ENCODE measurements at regions of chr19 and their contacts with region 1.

Region 1: GRCh38 chr19:28633319-28634018 is 579.5 kb downstream of the UQCRFS1 start:
- DNase-seq: peak; percentile 39 to 72
- H3K4me3 ChIP-seq: no peak overlapping the region
- H3K27ac ChIP-seq: no peak overlapping the region
- H3K4me1 ChIP-seq: peaks cover 0 to 3% (median 2%) of the 10 kb centered on the region in 4 experiments; a peak in 6 of 7 replicates
- H3K27me3 ChIP-seq: no peaks in the 10 kb centered on the region
- CTCF ChIP-seq: peak; percentile 91 to 99 (median 94)
- EP300 ChIP-seq: no peak
- POLR2A ChIP-seq: no peak
- RAD21 ChIP-seq: peak; percentile 97 to 98

Region 2: GRCh38 chr19:28443361-28443760 is 190.1 kb before region 1 on chr19:
- CTCF ChIA-PET with region 1: no interaction called
- POLR2A ChIA-PET with region 1: no interaction called
- DNase-seq: no peak
- H3K4me3 ChIP-seq: no peak overlapping the region
- H3K27ac ChIP-seq: no peak overlapping the region
- H3K4me1 ChIP-seq: peaks cover 3 to 17% (median 8%) of the 10 kb centered on the region in 4 experiments; a peak in 5 of 7 replicates
- H3K27me3 ChIP-seq: no peaks in the 10 kb centered on the region
- CTCF ChIP-seq: no peak
- EP300 ChIP-seq: no peak
- POLR2A ChIP-seq: no peak
- RAD21 ChIP-seq: no peak

Region 3: DNA sequence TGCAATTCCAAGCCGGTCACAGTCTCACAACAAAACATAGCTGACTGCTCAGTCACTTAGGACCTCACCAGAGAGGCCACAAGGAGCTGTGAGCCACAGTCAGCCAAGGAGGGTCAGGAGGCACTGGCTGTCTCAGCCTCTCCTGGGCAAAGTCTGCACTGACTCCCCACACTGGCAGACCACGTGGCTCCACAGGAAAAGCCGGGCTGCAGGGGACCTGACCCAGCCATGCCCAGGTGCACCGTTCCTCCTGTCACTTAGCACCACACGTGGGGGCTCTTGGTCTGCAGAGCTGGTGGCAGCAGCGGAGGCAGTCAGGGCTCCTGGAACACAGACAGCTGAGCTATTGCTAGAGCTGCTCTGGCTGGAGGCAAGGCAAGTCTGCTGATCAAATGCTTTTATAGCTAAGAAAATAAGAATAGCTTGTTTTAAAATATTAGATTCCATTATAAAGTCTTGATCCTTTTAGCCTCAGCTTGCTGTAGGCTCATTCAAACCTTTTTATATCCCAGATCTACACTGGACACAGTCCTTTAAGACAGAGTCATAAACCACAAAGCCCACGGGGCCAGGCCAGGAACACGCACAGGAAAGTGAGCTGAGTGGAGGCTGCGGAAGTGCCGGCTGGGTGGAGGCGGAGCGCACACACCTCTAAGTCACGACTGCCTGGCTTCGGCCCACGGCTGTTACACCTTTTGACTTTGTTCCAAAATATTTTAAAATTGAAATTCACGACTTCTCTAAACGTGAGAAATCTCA is 164.6 kb before region 1 on chr19:
- CTCF ChIA-PET with region 1: interaction called, 29 read pairs
- POLR2A ChIA-PET with region 1: interaction called, 3 read pairs
- DNase-seq: no peak
- H3K4me3 ChIP-seq: no peak overlapping the region
- H3K27ac ChIP-seq: no peak overlapping the region
- H3K4me1 ChIP-seq: peaks cover 0 to 5% (median 4%) of the 10 kb centered on the region in 4 experiments; a peak in 3 of 7 replicates
- H3K27me3 ChIP-seq: no peaks in the 10 kb centered on the region
- CTCF ChIP-seq: peak in 1 of 3 experiments; percentile 17; a peak in 1 of 4 replicates
- EP300 ChIP-seq: no peak
- POLR2A ChIP-seq: no peak
- RAD21 ChIP-seq: peak; percentile 37 to 61; a peak in 3 of 4 replicates

Region 4: GRCh38 chr19:28530406-28531035 is 102.9 kb before region 1 on chr19:
- CTCF ChIA-PET with region 1: interaction called, 10 read pairs
- POLR2A ChIA-PET with region 1: no interaction called
- DNase-seq: no peak
- H3K4me3 ChIP-seq: no peak overlapping the region
- H3K27ac ChIP-seq: no peak overlapping the region
- H3K4me1 ChIP-seq: no peaks in the 10 kb centered on the region
- H3K27me3 ChIP-seq: no peaks in the 10 kb centered on the region
- CTCF ChIP-seq: no peak
- EP300 ChIP-seq: no peak
- POLR2A ChIP-seq: no peak
- RAD21 ChIP-seq: peak in 1 of 2 experiments; percentile 11; a peak in 1 of 4 replicates

Region 5: GRCh38 chr19:28578785-28579505 is 54.5 kb before region 1 on chr19:
- CTCF ChIA-PET with region 1: interaction called, 15 read pairs
- POLR2A ChIA-PET with region 1: no interaction called
- DNase-seq: no peak
- H3K4me3 ChIP-seq: no peak overlapping the region
- H3K27ac ChIP-seq: no peak overlapping the region
- H3K4me1 ChIP-seq: peaks cover 6 to 27% (median 15%) of the 10 kb centered on the region in 4 experiments
- H3K27me3 ChIP-seq: no peaks in the 10 kb centered on the region
- CTCF ChIP-seq: no peak
- EP300 ChIP-seq: no peak
- POLR2A ChIP-seq: no peak
- RAD21 ChIP-seq: no peak

Region 6: DNA sequence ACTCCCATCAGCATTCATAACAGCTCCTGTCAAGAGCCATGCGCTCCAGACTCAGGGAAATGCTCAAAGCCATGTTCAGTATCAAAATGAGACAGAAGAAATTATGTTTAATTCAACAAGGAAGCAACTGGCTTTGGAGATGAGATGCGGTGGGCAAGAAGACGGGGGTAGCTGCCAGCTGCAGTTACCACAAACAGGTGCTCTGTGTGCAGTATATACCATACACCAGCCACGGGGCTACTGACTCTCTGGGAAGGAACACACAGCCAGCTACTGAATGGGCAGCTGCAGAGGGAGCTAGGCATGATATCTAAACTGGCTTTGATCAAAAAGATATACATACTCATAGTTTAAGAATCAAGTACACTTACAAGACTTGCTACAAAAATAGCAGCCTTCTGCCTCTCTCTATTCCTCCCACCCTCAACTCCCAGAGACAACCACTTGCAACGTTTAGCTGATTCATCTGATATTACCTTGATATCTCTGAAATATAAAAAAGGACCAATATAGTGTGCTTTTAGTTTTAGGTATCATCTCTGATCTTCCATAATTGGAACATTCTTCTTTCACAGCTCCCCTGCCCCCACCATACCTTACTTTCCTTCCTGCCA is 13.5 kb before region 1 on chr19:
- CTCF ChIA-PET with region 1: interaction called, 17 read pairs
- POLR2A ChIA-PET with region 1: interaction called, 4 read pairs
- DNase-seq: no peak
- H3K4me3 ChIP-seq: no peak overlapping the region
- H3K27ac ChIP-seq: no peak overlapping the region
- H3K4me1 ChIP-seq: no peaks in the 10 kb centered on the region
- H3K27me3 ChIP-seq: no peaks in the 10 kb centered on the region
- CTCF ChIP-seq: no peak
- EP300 ChIP-seq: no peak
- POLR2A ChIP-seq: no peak
- RAD21 ChIP-seq: no peak

Region 7: GRCh38 chr19:28700176-28700575 is 66.7 kb after region 1 on chr19:
- CTCF ChIA-PET with region 1: no interaction called
- POLR2A ChIA-PET with region 1: no interaction called
- DNase-seq: no peak
- H3K4me3 ChIP-seq: no peak overlapping the region
- H3K27ac ChIP-seq: no peak overlapping the region
- H3K4me1 ChIP-seq: no peaks in the 10 kb centered on the region
- H3K27me3 ChIP-seq: no peaks in the 10 kb centered on the region
- CTCF ChIP-seq: no peak
- EP300 ChIP-seq: no peak
- POLR2A ChIP-seq: no peak
- RAD21 ChIP-seq: no peak

Region 8: DNA sequence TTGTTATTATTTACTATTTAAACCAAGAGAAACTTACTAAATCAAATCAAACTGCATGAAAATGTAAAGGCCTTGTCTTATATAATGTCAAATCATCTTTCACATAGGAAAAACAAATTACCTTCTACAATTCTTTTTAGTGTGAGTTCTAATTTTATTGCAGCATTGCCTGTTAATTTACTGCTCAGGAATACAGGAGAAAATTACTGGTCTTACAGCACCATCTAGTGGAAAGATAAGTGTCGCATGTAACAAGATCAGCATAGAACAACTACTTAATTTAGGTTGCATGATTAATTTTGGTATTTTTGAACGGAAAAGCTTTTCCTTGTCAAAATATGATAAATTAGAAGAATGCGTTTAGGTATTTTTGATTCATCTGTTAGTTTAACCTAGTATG is 76.8 kb after region 1 on chr19:
- CTCF ChIA-PET with region 1: interaction called, 11 read pairs
- POLR2A ChIA-PET with region 1: no interaction called
- DNase-seq: no peak
- H3K4me3 ChIP-seq: no peak overlapping the region
- H3K27ac ChIP-seq: no peak overlapping the region
- H3K4me1 ChIP-seq: no peaks in the 10 kb centered on the region
- H3K27me3 ChIP-seq: no peaks in the 10 kb centered on the region
- CTCF ChIP-seq: peak in 2 of 3 experiments; percentile 37 to 62; a peak in 2 of 4 replicates
- EP300 ChIP-seq: no peak
- POLR2A ChIP-seq: no peak
- RAD21 ChIP-seq: peak; percentile 78 to 81

Measured in H1 (cell line).